ENCODE measurements at regions of chr1 and their contacts with region 1.

Region 1: DNA sequence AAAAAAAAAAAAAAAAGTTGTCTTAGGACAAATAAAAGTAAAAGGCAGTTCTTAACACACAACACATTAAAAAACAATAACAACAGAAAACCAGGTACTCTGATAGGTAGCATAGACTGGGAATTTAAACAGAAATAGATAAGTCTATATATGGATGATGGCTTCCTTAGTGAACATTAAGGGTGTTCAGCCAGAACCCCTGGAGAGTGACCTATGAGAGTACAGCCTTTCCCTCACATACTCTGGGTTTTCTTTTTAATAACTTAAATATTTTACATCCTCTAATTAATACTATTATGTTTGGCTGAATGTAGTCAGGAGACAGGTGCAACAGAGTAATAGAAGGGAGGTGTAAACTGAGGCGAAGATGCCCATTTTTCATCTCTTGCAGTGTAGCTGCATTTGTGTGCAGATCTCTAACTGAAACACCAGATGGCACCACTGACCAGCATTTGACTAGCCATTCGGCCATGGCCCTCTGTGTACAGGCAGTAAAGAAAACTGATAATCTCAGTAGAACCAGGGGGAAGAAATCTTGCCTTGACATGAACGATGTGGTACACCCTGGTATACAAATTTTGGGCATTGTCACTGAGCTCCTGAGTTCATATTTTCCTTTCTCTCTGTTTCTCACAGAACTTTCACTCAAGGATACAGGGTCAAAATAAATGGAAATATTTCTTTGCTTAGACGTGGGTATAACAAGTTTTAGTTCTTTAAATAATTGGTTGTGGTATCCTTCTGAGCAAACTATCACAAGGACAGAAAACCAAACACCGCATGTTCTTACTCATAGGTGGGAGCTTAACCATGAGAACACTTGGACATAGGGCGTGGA is 7.6 kb downstream of the TTF2 start:
- DNase-seq: peak; percentile 34 to 41
- ATAC-seq: peak; percentile 84 to 94; a peak in 5 of 6 replicates
- H3K4me3 ChIP-seq: no peak overlapping the region
- H3K27ac ChIP-seq: no peak overlapping the region
- H3K4me1 ChIP-seq: no peaks in the 10 kb centered on the region
- CTCF ChIP-seq: peak; percentile 70
- EP300 ChIP-seq: no peak
- POLR2A ChIP-seq: no peak
- RAD21 ChIP-seq: peak; percentile 73 to 82

Region 2: DNA sequence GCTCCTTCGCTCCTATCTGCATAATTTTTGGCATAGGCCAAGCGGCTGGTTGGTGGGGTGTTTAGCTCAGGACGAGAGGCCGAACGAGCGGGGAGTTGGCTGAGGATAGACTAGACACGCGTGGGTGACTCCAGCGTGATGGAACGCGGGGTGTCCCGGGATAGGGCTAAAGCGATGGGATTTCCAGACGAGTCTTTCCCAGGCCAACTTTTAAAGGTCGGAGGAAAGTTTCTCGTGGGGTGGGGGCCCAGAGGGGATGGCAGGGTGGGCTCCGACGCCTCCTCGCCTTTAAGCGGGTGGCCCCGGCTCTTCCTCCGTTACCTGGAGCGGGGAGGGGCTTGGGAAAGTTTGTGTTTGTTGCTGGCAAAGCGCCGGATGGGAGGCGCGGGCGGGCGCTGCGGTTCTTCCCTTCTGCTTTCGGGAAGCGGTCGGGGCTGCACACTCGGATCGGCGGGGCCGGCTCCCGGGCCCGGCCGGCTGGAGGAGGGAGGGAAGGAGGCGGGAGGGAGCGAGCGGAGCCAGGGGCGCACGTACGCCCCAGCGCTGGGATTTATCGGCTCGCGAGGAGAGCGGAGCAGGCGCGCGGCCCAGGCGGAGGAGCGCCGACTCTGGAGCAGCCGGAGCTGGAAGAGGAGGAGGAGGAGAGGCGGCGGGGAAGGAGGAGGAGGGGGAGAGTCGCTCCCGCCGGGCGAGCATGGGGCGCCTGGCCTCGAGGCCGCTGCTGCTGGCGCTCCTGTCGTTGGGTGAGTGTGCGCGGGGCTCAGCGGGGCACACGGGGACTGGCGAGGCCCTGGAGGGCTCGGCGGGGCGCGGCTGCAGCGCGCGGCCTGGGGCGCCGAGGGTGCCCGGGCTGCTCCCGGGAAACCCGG is 158.0 kb before region 1 on chr1 and contains the start of gene PTGFRN:
- CTCF ChIA-PET with region 1: no interaction called
- POLR2A ChIA-PET with region 1: no interaction called
- DNase-seq: peak; percentile 35 to 51
- ATAC-seq: peak; percentile 84 to 85
- H3K4me3 ChIP-seq: peak within 1 kb of the TSS; percentile 80
- H3K27ac ChIP-seq: peak within 1 kb of the TSS; percentile 84 to 99
- H3K4me1 ChIP-seq: peaks cover 10% of the 10 kb centered on the region
- CTCF ChIP-seq: no peak
- EP300 ChIP-seq: no peak
- POLR2A ChIP-seq: no peak
- RAD21 ChIP-seq: no peak
- polyA plus RNA-seq, gene PTGFRN: 39.0 and 51.1 TPM in 2 replicates

Region 3: DNA sequence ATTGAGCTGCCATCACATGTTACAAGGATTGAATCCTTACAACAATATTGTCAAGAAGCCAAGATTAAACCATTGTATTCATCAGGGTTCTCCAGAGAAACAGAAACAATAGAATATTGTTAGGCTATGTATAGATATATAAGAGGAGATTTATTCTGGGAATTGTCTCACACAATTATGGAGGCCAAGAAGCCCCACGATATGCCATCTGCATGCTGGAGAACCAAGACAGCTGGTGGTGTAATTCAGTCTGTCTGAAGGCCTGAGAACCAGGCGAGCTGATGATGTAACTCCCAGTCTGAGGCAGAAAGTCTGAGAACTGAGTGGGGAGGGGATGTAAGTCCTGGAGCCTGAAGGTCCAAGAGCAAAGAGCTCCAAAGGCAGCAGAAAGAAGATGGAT is 22.1 kb before region 1 on chr1:
- CTCF ChIA-PET with region 1: no interaction called
- POLR2A ChIA-PET with region 1: no interaction called
- DNase-seq: no peak
- ATAC-seq: no peak
- H3K4me3 ChIP-seq: no peak overlapping the region
- H3K27ac ChIP-seq: no peak overlapping the region
- H3K4me1 ChIP-seq: no peaks in the 10 kb centered on the region
- CTCF ChIP-seq: no peak
- EP300 ChIP-seq: no peak
- POLR2A ChIP-seq: no peak
- RAD21 ChIP-seq: no peak

Region 4: GRCh38 chr1:117093870-117094621 is 26.3 kb after region 1 on chr1:
- CTCF ChIA-PET with region 1: interaction called, 12 read pairs
- POLR2A ChIA-PET with region 1: no interaction called
- DNase-seq: peak; percentile 10 to 25
- ATAC-seq: peak; percentile 39 to 76; a peak in 3 of 6 replicates
- H3K4me3 ChIP-seq: no peak overlapping the region
- H3K27ac ChIP-seq: peak overlapping the region; percentile 51 to 62
- H3K4me1 ChIP-seq: peaks cover 14% of the 10 kb centered on the region
- CTCF ChIP-seq: no peak
- EP300 ChIP-seq: no peak
- POLR2A ChIP-seq: no peak
- RAD21 ChIP-seq: 0 out of 5 replicates have a peak, but pooled peaks of 1 of the 2 experiments have one; percentile 2

Region 5: GRCh38 chr1:117128323-117129079 is 60.7 kb after region 1 on chr1:
- CTCF ChIA-PET with region 1: interaction called, 52 read pairs
- POLR2A ChIA-PET with region 1: no interaction called
- DNase-seq: peak; percentile 22 to 23
- ATAC-seq: peak in 1 of 2 experiments; percentile 68; a peak in 3 of 6 replicates
- H3K4me3 ChIP-seq: no peak overlapping the region
- H3K27ac ChIP-seq: peak overlapping the region in 1 of 2 experiments; percentile 44; a peak in 1 of 6 replicates
- H3K4me1 ChIP-seq: peaks cover 4% of the 10 kb centered on the region; the same call in 1 of the 3 replicates
- CTCF ChIP-seq: peak; percentile 54
- EP300 ChIP-seq: no peak
- POLR2A ChIP-seq: no peak
- RAD21 ChIP-seq: peak; percentile 32 to 46; a peak in 4 of 5 replicates

Region 6: GRCh38 chr1:117284399-117285215 is 216.9 kb after region 1 on chr1:
- CTCF ChIA-PET with region 1: interaction called, 126 read pairs
- POLR2A ChIA-PET with region 1: interaction called, 3 read pairs
- DNase-seq: peak; percentile 43 to 71
- ATAC-seq: peak; percentile 86
- H3K4me3 ChIP-seq: no peak overlapping the region
- H3K27ac ChIP-seq: no peak overlapping the region
- H3K4me1 ChIP-seq: no peaks in the 10 kb centered on the region
- CTCF ChIP-seq: peak; percentile 77
- EP300 ChIP-seq: no peak
- POLR2A ChIP-seq: no peak
- RAD21 ChIP-seq: peak; percentile 83 to 88